MCF 10A (cell line): ENCODE measurements at regions of chr20 and their contacts with region 1.

Region 1: GRCh38 chr20:3767427-3768341 is at the start of gene ADISSP:
- DNase-seq: peak; percentile 98
- H3K4me3 Mint-ChIP-seq: peak within 1 kb of the TSS; percentile 84
- H3K27ac Mint-ChIP-seq: peak within 1 kb of the TSS; percentile 91
- H3K4me1 Mint-ChIP-seq: peaks cover 18% of the 10 kb centered on the region
- H3K27me3 Mint-ChIP-seq: no peaks in the 10 kb centered on the region
- CTCF ChIP-seq: no peak
- total RNA-seq, gene ADISSP: 37.8 and 58.8 TPM in 2 replicates

Region 2: DNA sequence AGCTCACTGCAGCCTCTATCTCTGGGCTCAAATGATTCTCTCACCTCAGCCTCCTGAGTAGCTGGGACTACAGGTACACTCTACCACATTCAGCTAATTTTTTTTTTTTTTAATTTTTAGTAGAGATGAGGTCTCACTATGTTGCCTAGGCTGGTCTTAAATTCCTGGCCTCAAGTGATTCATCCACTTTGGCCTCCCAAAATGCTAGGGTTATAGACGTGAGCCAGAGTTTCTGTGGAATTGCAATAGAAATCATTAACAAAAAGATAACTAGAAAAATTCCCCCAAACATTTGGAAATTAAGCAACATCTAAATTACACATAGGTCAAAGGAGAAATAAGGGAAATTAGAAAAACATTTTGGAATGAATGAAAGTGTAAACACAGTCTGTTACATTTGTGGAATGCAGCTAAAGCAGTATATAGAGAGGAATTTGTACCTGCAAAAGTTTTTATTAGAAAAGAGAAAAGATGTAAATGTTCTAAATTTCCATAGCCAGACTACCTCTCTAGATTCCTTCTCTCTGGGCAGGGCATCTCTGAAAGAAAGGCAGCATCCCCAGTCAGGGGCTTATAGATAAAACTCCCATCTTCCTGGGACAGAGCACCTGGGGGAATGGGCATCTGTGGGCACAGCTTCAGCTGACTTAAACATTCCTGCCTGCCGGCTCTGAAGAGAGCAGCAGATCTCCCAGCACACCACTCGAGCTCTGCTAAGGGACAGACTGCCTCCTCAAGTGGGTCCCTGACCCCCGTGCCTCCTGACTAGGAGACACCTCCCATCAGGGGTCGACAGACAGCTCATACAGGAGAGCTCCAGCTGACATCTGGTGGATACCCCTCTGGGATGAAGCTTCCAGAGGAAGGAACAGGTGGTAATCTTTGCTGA is 245.6 kb before region 1 on chr20:
- CTCF ChIA-PET with region 1: no interaction called
- POLR2A ChIA-PET with region 1: no interaction called
- intact Hi-C with region 1: no loop called
- DNase-seq: no peak
- H3K4me3 Mint-ChIP-seq: no peak overlapping the region
- H3K27ac Mint-ChIP-seq: no peak overlapping the region
- H3K4me1 Mint-ChIP-seq: no peaks in the 10 kb centered on the region
- H3K27me3 Mint-ChIP-seq: no peaks in the 10 kb centered on the region
- CTCF ChIP-seq: no peak

Region 3: DNA sequence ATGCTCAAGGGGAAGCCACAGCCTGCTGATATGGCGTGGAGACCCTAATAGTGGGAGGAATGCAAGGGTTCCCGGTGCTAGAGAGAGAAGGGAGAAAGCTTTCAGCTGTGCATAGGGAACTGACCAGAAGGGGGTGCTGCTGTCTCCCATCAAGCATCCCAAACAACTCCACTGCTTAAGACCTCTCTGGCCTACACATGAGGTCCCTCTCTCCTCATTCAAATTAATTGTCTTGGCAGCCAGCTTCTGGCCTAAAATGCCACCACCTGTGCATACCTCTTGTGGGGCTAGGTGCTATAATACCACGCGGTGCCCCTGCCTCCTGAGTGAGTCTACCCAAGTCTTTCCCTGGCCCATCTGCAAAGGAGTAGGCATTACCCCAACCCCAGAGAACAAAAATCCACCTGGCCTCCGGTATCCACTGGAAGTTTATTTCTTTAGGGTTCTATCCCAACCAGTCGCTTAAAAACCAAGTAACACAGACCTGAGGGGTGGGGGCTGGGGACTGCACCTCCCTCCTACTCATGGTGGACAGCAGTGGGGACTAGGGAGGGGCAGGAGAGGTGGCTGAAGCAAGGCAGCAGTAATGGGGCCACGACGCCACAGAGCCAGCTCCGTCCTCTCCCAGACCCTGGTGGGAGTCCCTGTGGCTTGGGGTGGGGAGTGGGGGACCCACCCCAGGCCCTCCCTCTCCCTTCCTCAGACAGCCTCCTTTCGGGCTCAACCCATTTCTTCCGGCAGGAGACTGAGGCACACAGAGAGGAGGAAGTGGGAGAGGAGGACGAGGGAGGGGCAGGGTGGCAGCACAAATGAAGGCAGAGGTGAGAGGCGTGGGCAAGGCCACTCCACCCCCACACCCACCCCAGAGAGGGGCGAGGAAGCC is 14.3 kb before region 1 on chr20:
- CTCF ChIA-PET with region 1: interaction called, 65 read pairs
- POLR2A ChIA-PET with region 1: interaction called, 9 read pairs
- intact Hi-C with region 1: no loop called
- DNase-seq: peak; percentile 72
- H3K4me3 Mint-ChIP-seq: no peak overlapping the region
- H3K27ac Mint-ChIP-seq: no peak overlapping the region
- H3K4me1 Mint-ChIP-seq: no peaks in the 10 kb centered on the region
- H3K27me3 Mint-ChIP-seq: no peaks in the 10 kb centered on the region
- CTCF ChIP-seq: peak; percentile 78

Region 4: GRCh38 chr20:3786665-3787323 is 19.1 kb after region 1 on chr20 and contains the start of gene CENPB:
- CTCF ChIA-PET with region 1: interaction called, 23 read pairs
- POLR2A ChIA-PET with region 1: interaction called, 61 read pairs
- intact Hi-C with region 1: no loop called
- DNase-seq: peak; percentile 84
- H3K4me3 Mint-ChIP-seq: peak within 1 kb of the TSS; percentile 76
- H3K27ac Mint-ChIP-seq: peak within 1 kb of the TSS; percentile 42
- H3K4me1 Mint-ChIP-seq: peaks cover 33% of the 10 kb centered on the region
- H3K27me3 Mint-ChIP-seq: no peaks in the 10 kb centered on the region
- CTCF ChIP-seq: peak; percentile 88
- total RNA-seq, gene CENPB: 51.5 and 54.8 TPM in 2 replicates

Region 5: GRCh38 chr20:3811467-3812258 is 44.0 kb after region 1 on chr20:
- CTCF ChIA-PET with region 1: no interaction called
- POLR2A ChIA-PET with region 1: interaction called, 24 read pairs
- intact Hi-C with region 1: no loop called
- DNase-seq: peak; percentile 99
- H3K4me3 Mint-ChIP-seq: peak overlapping the region; percentile 83
- H3K27ac Mint-ChIP-seq: peak overlapping the region; percentile 95
- H3K4me1 Mint-ChIP-seq: peaks cover 33% of the 10 kb centered on the region
- H3K27me3 Mint-ChIP-seq: no peaks in the 10 kb centered on the region
- CTCF ChIP-seq: no peak

Region 6: GRCh38 chr20:3888622-3889488 is 121.2 kb after region 1 on chr20 and contains the start of gene PANK2:
- CTCF ChIA-PET with region 1: no interaction called
- POLR2A ChIA-PET with region 1: interaction called, 13 read pairs
- intact Hi-C with region 1: no loop called
- DNase-seq: peak; percentile 99
- H3K4me3 Mint-ChIP-seq: peak within 1 kb of the TSS; percentile 91
- H3K27ac Mint-ChIP-seq: peak within 1 kb of the TSS; percentile 96
- H3K4me1 Mint-ChIP-seq: peaks cover 19% of the 10 kb centered on the region
- H3K27me3 Mint-ChIP-seq: no peaks in the 10 kb centered on the region
- CTCF ChIP-seq: peak; percentile 11
- total RNA-seq, gene PANK2: 29.2 and 32.8 TPM in 2 replicates